ENCODE measurements at regions of chr19 and their contacts with region 1.

Region 1: GRCh38 chr19:34134190-34135053 is 37.9 kb upstream of the LSM14A start:
- DNase-seq: peak; percentile 89

Region 2: GRCh38 chr19:34145741-34146202 is 11.3 kb after region 1 on chr19:
- CTCF ChIA-PET with region 1: interaction called, 10 read pairs
- POLR2A ChIA-PET with region 1: interaction called, 4 read pairs
- DNase-seq: peak; percentile 72

Region 3: GRCh38 chr19:34253699-34254551 is 119.5 kb after region 1 on chr19:
- CTCF ChIA-PET with region 1: no interaction called
- POLR2A ChIA-PET with region 1: no interaction called
- DNase-seq: no peak

Region 4: DNA sequence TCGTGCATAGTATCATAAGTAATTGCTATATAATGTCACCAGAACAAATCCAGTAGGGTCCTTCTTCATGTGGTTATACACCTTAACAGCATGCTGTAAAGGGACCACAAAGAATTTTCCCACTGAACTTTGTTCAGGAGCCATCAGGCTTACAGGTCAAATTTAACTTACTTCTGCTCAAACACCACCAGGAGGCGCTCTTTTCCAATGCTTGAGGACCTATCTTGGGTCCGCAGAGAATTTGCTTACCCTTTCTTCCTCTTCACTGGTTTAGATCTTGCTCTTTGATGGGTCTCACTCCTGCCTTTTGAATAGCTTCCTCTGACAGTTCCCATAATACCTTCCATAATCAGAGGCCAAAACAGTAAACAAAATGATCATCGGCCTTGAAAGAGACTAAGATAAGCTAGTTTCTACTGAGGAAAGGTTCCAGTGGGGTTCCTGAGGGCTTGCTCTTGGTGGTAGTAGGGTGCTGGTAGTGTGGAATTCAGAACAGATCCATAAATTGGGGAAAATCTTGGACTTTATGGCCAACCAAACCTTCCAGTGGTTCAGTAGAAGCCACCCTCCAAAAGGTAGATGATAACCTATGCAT is 505.2 kb after region 1 on chr19:
- CTCF ChIA-PET with region 1: no interaction called
- POLR2A ChIA-PET with region 1: no interaction called
- DNase-seq: peak; percentile 56

Measured in HEK293T (cell line).